ENCODE measurements at regions of chr6 and their contacts with region 1.

Region 1: GRCh38 chr6:31541658-31542521 is at the start of gene DDX39B:
- DNase-seq: peak; percentile 86 to 98 (median 93)
- ATAC-seq: peak; percentile 74 to 77
- H3K4me3 Mint-ChIP-seq: peak within 1 kb of the TSS; percentile 96 to 99 (median 98)
- H3K27ac Mint-ChIP-seq: peak within 1 kb of the TSS; percentile 99 to 100 (median 99)
- H3K4me1 Mint-ChIP-seq: peaks cover 33 to 64% (median 52%) of the 10 kb centered on the region in 4 donors
- H3K27me3 Mint-ChIP-seq: no peaks in the 10 kb centered on the region
- polyA plus RNA-seq, gene DDX39B: 53.6 to 104 (median 96.0) TPM

Region 2: DNA sequence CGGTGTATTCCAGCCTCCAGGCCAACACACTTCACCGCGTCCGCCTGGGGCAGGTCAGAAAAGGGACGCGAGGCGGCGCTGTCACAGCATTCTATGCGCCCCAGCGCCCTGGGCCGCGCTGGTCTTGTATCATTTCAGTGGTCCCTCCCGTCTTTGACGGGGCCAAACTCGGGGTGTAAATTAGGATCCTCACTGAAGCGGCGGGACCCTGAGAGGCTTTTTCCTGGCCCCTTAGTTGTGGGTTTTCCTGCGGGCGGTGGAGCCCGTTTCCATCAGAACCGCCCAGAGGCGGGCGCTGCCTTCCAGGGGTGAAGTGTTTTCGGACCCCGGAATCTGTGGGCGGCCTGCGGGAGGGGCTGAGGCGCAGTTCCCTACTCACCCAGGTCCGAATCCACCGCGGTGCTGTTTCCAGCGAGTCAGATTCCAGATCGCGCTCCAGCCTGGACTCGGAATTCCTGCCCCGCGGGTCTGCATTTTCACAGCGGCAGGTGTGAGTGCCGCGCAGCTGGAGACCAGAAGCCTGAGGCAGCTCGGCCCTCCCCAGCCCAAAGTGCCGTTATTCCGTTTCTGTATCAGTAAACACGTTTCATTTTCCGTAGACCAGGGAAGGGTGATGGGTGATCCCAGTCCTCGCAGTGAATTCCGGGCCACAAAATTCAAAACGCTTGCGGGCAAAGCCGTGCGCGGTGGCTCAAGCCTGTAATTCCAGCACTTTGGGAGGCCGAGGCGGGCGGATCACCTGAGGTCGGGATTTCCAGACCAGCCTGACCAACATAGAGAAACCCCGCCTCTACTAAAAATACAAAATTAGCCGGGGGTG is 47.8 kb before region 1 on chr6:
- POLR2A ChIA-PET with region 1: interaction called, 80 read pairs
- DNase-seq: peak; percentile 43 to 80 (median 70)
- ATAC-seq: peak; percentile 37 to 44
- H3K4me3 Mint-ChIP-seq: peak overlapping the region; percentile 74 to 97 (median 81)
- H3K27ac Mint-ChIP-seq: peak overlapping the region; percentile 41 to 96 (median 88)
- H3K4me1 Mint-ChIP-seq: peaks cover 28 to 62% (median 52%) of the 10 kb centered on the region in 4 donors
- H3K27me3 Mint-ChIP-seq: no peaks in the 10 kb centered on the region

Region 3: GRCh38 chr6:31559958-31560696 is 18.2 kb after region 1 on chr6:
- POLR2A ChIA-PET with region 1: interaction called, 16 read pairs
- DNase-seq: peak in 3 of 10 donors; percentile 22 to 53 (median 50)
- ATAC-seq: peak; percentile 46 to 55
- H3K4me3 Mint-ChIP-seq: peak overlapping the region; percentile 20 to 90 (median 80)
- H3K27ac Mint-ChIP-seq: peak overlapping the region; percentile 65 to 91 (median 88)
- H3K4me1 Mint-ChIP-seq: peaks cover 42 to 84% (median 68%) of the 10 kb centered on the region in 4 donors
- H3K27me3 Mint-ChIP-seq: no peaks in the 10 kb centered on the region

Region 4: DNA sequence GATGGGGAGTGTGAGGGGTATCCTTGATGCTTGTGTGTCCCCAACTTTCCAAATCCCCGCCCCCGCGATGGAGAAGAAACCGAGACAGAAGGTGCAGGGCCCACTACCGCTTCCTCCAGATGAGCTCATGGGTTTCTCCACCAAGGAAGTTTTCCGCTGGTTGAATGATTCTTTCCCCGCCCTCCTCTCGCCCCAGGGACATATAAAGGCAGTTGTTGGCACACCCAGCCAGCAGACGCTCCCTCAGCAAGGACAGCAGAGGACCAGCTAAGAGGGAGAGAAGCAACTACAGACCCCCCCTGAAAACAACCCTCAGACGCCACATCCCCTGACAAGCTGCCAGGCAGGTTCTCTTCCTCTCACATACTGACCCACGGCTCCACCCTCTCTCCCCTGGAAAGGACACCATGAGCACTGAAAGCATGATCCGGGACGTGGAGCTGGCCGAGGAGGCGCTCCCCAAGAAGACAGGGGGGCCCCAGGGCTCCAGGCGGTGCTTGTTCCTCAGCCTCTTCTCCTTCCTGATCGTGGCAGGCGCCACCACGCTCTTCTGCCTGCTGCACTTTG is 33.5 kb after region 1 on chr6 and contains the start of gene TNF:
- POLR2A ChIA-PET with region 1: interaction called, 68 read pairs
- DNase-seq: peak in 2 of 10 donors; percentile 26 to 58
- ATAC-seq: no peak
- H3K4me3 Mint-ChIP-seq: peak within 1 kb of the TSS; percentile 60 to 95 (median 84)
- H3K27ac Mint-ChIP-seq: peak within 1 kb of the TSS; percentile 86 to 100 (median 99)
- H3K4me1 Mint-ChIP-seq: peaks cover 45 to 96% (median 89%) of the 10 kb centered on the region in 4 donors
- H3K27me3 Mint-ChIP-seq: no peaks in the 10 kb centered on the region
- polyA plus RNA-seq, gene TNF: 0.11 to 0.53 (median 0.37) TPM

Region 5: DNA sequence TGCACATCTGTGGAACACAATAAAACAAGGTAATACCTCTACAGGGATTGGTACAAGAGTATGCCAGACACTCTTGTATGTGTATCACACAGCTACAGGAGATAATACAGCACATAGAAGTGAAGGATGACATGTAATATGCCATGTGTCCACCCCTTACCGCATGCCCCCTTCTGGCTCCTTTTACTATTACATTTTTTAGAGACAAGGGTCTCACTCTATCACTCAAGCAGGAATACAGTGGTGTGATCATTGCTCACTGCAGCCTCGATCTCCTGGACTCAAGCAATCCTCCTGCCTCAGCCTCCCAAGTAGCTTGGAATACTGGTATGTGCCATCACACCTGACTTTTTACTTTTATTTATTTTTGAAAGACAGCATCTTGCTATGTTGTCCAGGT is 55.1 kb after region 1 on chr6:
- POLR2A ChIA-PET with region 1: interaction called, 155 read pairs
- DNase-seq: peak in 7 of 10 donors; percentile 42 to 82 (median 79)
- ATAC-seq: peak; percentile 78 to 80
- H3K4me3 Mint-ChIP-seq: peak overlapping the region in 9 of 10 donors; percentile 30 to 74 (median 62)
- H3K27ac Mint-ChIP-seq: peak overlapping the region; percentile 46 to 90 (median 84)
- H3K4me1 Mint-ChIP-seq: peaks cover 19 to 57% (median 54%) of the 10 kb centered on the region in 4 donors
- H3K27me3 Mint-ChIP-seq: no peaks in the 10 kb centered on the region

Region 6: GRCh38 chr6:31665501-31666336 is 123.8 kb after region 1 on chr6 and contains the start of gene CSNK2B:
- POLR2A ChIA-PET with region 1: interaction called, 16 read pairs
- DNase-seq: peak; percentile 94 to 98 (median 98)
- ATAC-seq: peak; percentile 85 to 86
- H3K4me3 Mint-ChIP-seq: peak within 1 kb of the TSS; percentile 93 to 100 (median 97)
- H3K27ac Mint-ChIP-seq: peak within 1 kb of the TSS; percentile 96 to 99 (median 98)
- H3K4me1 Mint-ChIP-seq: peaks cover 21 to 73% (median 67%) of the 10 kb centered on the region in 4 donors
- H3K27me3 Mint-ChIP-seq: no peaks in the 10 kb centered on the region
- polyA plus RNA-seq, gene CSNK2B: 214 to 230 (median 217) TPM

Region 7: DNA sequence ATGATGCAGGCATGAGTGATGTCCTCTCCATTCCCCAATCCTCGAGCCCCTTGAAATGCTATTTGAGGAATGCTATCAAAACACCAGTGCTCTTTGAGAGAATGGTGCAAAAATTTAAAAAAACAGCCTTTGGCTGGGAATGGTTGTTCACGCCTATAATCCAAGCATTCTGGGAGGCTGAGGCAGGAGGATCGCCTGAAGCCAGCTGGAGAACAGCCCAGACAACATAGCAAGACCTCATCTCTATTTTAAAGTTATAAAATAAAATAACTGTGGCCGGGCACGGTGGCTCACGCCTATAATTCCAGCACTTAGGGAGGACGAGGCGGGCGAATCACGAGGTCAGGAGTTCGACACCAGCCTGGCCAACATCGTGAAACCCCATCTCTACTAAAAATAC is 257.9 kb after region 1 on chr6:
- POLR2A ChIA-PET with region 1: no interaction called
- DNase-seq: no peak
- ATAC-seq: no peak
- H3K4me3 Mint-ChIP-seq: no peak overlapping the region
- H3K27ac Mint-ChIP-seq: no peak overlapping the region
- H3K4me1 Mint-ChIP-seq: peaks cover 12 to 38% (median 29%) of the 10 kb centered on the region in 4 donors
- H3K27me3 Mint-ChIP-seq: no peaks in the 10 kb centered on the region

Measured in naive thymus-derived CD8-positive, alpha-beta T cell (primary cell).